Mammary epithelial cell (primary cell): ENCODE measurements at regions of chr14 and their contacts with region 1.

Region 1: DNA sequence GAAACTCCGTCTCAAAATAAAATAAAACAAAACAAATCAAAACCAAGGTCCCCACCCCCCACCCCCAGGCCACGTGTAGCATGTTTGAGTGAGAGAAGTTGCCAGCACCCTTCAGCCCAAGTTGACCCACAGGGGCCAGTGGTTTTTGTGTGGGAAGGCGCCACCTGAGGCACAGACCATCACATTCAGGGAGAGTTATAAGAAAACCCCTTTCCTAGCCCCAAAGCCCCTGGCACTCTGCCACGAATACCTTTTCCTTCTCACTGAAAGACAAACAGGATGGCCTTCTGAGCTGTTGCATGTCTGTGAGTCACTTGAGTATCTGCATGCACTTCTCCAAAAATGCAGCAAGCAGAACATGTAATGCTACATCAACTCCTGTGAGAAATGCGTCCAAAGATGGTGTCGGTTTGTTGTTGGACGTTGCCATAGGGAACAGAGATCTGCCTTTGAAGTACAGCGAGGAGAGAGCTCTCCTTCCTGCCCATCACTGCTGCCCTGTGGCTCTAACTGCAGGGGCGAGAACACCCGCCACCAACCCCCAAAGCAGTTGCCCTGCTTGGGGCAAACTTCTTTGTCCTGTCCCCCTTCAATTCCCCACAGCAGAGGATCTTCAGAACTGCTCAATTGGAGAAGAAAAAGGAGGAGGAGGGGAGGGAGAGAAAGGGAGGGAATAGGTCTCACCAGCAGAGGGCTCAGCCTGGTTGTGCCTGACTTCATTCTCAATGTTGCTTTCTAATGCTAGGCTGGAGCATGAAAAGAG is 2.7 kb upstream of the TRAF3 start:
- DNase-seq: peak; percentile 63
- H3K4me3 ChIP-seq: no peak overlapping the region
- H3K27ac ChIP-seq: no peak overlapping the region
- H3K4me1 ChIP-seq: peaks cover 24% of the 10 kb centered on the region
- H3K27me3 ChIP-seq: no peaks in the 10 kb centered on the region
- CTCF ChIP-seq: peak; percentile 74 to 83

Region 2: GRCh38 chr14:102749393-102750305 is 24.9 kb before region 1 on chr14:
- CTCF ChIA-PET with region 1: no interaction called
- dilution Hi-C with region 1: no loop called
- in situ Hi-C with region 1: no loop called
- intact Hi-C with region 1: no loop called
- DNase-seq: no peak
- H3K4me3 ChIP-seq: no peak overlapping the region
- H3K27ac ChIP-seq: no peak overlapping the region
- H3K4me1 ChIP-seq: no peaks in the 10 kb centered on the region
- H3K27me3 ChIP-seq: no peaks in the 10 kb centered on the region
- CTCF ChIP-seq: no peak

Region 3: DNA sequence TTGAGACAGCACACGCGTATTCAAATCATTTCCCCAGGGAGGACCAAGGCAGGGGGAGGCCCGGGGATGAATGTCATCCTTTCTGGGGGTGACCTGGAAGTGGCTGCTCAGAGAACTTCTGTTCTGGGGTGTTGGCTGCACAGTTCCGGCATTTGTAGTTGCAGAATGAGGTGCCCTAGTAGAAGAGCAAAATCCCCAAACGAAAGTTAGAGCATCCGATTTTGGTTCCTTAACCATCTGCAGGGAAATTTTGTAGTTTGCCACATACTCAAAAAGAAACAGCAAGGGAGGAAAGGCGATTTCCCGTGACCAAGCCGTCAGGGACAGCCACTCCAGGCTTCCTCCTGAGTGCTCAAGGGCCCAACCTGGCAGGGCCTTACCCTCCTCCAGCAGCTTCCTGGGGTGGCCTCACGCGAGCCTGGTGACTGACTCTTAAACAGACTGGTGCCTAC is 10.3 kb before region 1 on chr14:
- CTCF ChIA-PET with region 1: no interaction called
- dilution Hi-C with region 1: no loop called
- in situ Hi-C with region 1: no loop called
- intact Hi-C with region 1: no loop called
- DNase-seq: no peak
- H3K4me3 ChIP-seq: no peak overlapping the region
- H3K27ac ChIP-seq: no peak overlapping the region
- H3K4me1 ChIP-seq: no peaks in the 10 kb centered on the region
- H3K27me3 ChIP-seq: no peaks in the 10 kb centered on the region
- CTCF ChIP-seq: no peak

Region 4: DNA sequence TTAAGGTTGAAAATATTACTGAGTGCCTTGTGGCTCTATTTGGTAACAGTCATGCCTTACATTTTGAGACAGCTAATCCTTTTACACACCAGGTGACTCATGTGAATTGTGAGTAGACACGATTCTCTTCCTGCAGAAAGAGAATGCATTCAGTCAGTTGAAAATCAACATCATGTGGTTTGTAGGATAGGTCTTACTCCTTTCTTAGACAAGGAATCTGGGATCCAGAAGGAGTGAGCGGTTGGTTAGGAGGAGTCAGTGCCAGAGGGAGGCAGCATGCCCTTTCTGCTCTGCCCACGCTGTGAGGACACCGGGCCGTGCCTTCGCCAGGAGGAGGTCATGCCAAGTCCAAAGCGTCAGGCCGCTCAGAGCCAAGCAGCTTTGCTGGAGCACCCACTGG is 50.3 kb after region 1 on chr14:
- CTCF ChIA-PET with region 1: no interaction called
- dilution Hi-C with region 1: no loop called
- in situ Hi-C with region 1: no loop called
- intact Hi-C with region 1: loop called (anchors 2 kb)
- DNase-seq: peak; percentile 91
- H3K4me3 ChIP-seq: no peak overlapping the region
- H3K27ac ChIP-seq: peak overlapping the region; percentile 2
- H3K4me1 ChIP-seq: peaks cover 34% of the 10 kb centered on the region
- H3K27me3 ChIP-seq: no peaks in the 10 kb centered on the region
- CTCF ChIP-seq: peak in 1 of 2 donors; percentile 21

Region 5: DNA sequence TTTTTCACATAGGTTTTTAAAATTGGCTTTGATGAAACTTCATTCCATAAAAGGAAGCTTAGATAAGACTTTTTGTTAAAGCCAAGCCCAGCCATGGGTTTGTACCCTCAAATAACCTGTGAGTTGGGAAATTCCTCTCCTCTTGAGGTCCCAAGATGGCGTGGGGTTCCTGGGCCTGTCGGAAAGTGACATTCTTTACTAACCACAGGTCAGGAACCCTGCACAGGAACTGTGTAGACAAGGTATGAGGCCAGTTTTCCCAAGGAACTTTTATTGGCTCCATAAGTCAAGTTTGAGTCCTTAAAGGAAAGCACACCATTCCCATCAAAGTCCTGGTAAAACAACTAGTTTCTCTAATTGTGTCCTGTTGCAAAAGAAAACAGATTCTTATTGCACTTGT is 82.9 kb after region 1 on chr14:
- CTCF ChIA-PET with region 1: no interaction called
- dilution Hi-C with region 1: no loop called
- in situ Hi-C with region 1: no loop called
- intact Hi-C with region 1: no loop called
- DNase-seq: no peak
- H3K4me3 ChIP-seq: no peak overlapping the region
- H3K27ac ChIP-seq: no peak overlapping the region
- H3K4me1 ChIP-seq: no peaks in the 10 kb centered on the region
- H3K27me3 ChIP-seq: no peaks in the 10 kb centered on the region
- CTCF ChIP-seq: no peak